Aorta (tissue), 5 donors: ENCODE measurements at regions of chr17 and their contacts with region 1.

Region 1: GRCh38 chr17:40121181-40122135 is at the start of gene MSL1:
- DNase-seq: peak; percentile 92 to 96
- ATAC-seq: peak; percentile 93
- H3K4me3 ChIP-seq: peak within 1 kb of the TSS; percentile 62 to 100
- H3K27ac ChIP-seq: peak within 1 kb of the TSS; percentile 45 to 93
- H3K4me1 ChIP-seq: peaks cover 0 to 3% of the 10 kb centered on the region in 2 donors
- H3K27me3 ChIP-seq: no peaks in the 10 kb centered on the region
- total RNA-seq, gene MSL1: 81.0 to 100 TPM

Region 2: DNA sequence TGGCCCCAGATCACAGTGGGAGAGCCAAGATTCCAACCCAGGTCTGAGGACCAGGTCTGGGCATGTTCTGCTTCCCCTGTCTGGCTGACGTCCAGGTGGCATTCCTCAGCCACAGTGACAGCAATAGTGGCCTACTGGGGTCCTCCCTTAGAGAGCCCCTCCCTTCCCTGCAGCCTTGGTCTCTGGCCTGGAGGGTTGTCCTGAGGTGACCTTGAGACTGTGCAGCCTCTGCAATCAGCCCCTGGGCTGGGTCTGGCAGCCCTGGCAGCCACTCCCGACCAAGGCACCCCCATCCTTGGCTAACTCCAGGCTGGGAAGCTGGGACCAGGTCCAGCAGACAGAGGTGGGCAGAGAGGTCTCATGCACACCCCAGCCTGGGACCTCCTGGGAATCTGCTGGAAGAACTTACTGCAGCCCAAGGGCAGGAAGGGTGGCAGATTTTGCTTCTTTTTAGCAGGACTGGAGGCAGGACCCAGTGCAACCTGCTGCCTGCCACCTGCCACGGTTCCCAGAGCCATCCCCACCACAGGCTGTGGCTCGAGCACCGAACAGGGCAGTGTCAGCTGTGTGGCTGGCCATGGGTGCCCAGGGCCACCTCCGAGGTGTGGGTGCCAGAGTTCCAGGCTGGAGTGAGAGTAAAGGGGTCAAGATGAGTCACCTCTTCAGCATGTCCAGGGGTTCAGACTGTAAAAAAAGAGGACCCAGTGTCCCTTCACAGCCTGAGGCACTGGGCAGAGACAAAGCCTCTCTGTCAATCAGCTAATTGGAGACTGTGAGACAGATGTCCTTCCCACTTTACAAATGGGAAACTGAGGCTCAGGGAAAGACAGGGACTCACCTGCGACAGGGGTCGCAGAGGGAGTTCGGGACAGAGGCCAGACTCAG is 371.1 kb before region 1 on chr17:
- intact Hi-C with region 1: no loop called
- DNase-seq: peak in 1 of 2 donors; percentile 50
- ATAC-seq: no peak
- H3K4me3 ChIP-seq: no peak overlapping the region
- H3K27ac ChIP-seq: no peak overlapping the region
- H3K4me1 ChIP-seq: no peaks in the 10 kb centered on the region
- H3K27me3 ChIP-seq: no peaks in the 10 kb centered on the region

Region 3: GRCh38 chr17:40139566-40140058 is 18.2 kb after region 1 on chr17:
- intact Hi-C with region 1: loop called in 1 of 2 experiments (anchors 2 kb)
- DNase-seq: no peak
- ATAC-seq: peak; percentile 8
- H3K4me3 ChIP-seq: peak overlapping the region; percentile 9 to 78
- H3K27ac ChIP-seq: peak overlapping the region; percentile 16 to 100
- H3K4me1 ChIP-seq: peaks cover 0 to 2% of the 10 kb centered on the region in 2 donors
- H3K27me3 ChIP-seq: no peaks in the 10 kb centered on the region